HepG2 (cell line): ENCODE measurements at regions of chr19 and their contacts with region 1.

Region 1: GRCh38 chr19:44615863-44616247 is 2.5 kb downstream of the IGSF23 start:
- DNase-seq: peak; percentile 78
- ATAC-seq: peak; percentile 48
- H3K4me3 ChIP-seq: peak overlapping the region; percentile 3 to 79 (median 33); a peak in 4 of 6 replicates
- H3K27ac ChIP-seq: peak overlapping the region; percentile 92
- H3K4me1 ChIP-seq: peaks cover 70% of the 10 kb centered on the region
- H3K27me3 ChIP-seq: no peaks in the 10 kb centered on the region; a peak in 1 of 5 replicates
- CTCF ChIP-seq: no peak
- EP300 ChIP-seq: no peak; a peak in 2 of 4 replicates
- POLR2A ChIP-seq: no peak
- RAD21 ChIP-seq: no peak

Region 2: DNA sequence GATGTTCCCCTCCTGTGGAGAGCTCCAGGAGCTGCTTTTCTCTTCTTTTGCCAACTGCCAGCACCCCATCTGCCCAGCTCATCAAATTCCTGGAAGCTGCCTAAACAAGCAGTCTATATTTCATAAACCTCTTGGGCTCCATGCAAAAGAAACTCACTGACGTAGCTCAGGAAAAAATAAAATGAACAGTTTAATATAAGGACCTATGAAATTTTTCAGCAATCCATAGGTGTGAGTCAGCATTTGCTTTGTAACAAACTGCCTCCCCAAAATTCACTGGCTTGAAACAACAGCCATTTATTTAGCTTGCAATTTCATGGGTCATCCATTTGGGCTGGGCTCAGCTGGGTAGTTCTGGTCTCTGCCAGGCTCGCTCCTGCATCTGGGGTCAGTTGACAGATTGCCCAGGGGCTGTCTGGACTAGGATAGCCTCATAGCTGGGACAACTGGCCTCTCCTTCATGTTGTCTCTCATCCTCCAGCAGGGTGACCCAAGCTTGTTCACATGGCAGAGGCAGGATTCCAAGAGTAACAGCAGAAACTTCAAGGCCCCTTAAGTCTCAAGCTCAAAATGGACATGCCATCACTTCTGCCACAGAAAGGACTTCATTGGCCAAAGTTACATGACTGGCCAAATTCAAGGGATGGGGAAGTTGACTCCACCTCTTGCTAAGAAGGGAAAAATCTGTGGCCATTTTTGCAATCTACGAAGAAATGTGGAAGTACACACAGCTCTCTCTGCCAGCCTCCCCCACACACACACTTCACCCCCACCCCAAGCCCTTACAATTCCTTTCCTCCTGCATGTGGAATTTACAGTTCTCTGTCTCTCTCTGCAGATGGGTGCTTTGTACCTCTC is 20.0 kb after region 1 on chr19:
- CTCF ChIA-PET with region 1: no interaction called
- POLR2A ChIA-PET with region 1: interaction called, 68 read pairs
- in situ Hi-C with region 1: no loop called
- intact Hi-C with region 1: loop called (anchors 2 kb)
- DNase-seq: no peak
- ATAC-seq: peak; percentile 29; the same call in 2 of the 3 replicates
- H3K4me3 ChIP-seq: no peak overlapping the region
- H3K27ac ChIP-seq: peak overlapping the region; percentile 72
- H3K4me1 ChIP-seq: peaks cover 59% of the 10 kb centered on the region
- H3K27me3 ChIP-seq: no peaks in the 10 kb centered on the region
- CTCF ChIP-seq: no peak
- EP300 ChIP-seq: no peak
- POLR2A ChIP-seq: no peak
- RAD21 ChIP-seq: no peak

Region 3: GRCh38 chr19:44643605-44644401 is 27.9 kb after region 1 on chr19 and contains the start of gene PVR:
- CTCF ChIA-PET with region 1: no interaction called
- POLR2A ChIA-PET with region 1: interaction called, 36 read pairs
- in situ Hi-C with region 1: no loop called
- intact Hi-C with region 1: no loop called
- DNase-seq: peak; percentile 50
- ATAC-seq: peak; percentile 92
- H3K4me3 ChIP-seq: peak within 1 kb of the TSS; percentile 74 to 81 (median 79)
- H3K27ac ChIP-seq: peak within 1 kb of the TSS; percentile 82
- H3K4me1 ChIP-seq: peaks cover 60% of the 10 kb centered on the region
- H3K27me3 ChIP-seq: no peaks in the 10 kb centered on the region; a peak in 1 of 5 replicates
- CTCF ChIP-seq: peak; percentile 35
- EP300 ChIP-seq: no peak
- POLR2A ChIP-seq: peak; percentile 73 to 85
- RAD21 ChIP-seq: peak; percentile 64; the same call in 1 of the 2 replicates
- total RNA-seq, gene PVR: 18.4 and 43.4 TPM in 2 replicates

Region 4: DNA sequence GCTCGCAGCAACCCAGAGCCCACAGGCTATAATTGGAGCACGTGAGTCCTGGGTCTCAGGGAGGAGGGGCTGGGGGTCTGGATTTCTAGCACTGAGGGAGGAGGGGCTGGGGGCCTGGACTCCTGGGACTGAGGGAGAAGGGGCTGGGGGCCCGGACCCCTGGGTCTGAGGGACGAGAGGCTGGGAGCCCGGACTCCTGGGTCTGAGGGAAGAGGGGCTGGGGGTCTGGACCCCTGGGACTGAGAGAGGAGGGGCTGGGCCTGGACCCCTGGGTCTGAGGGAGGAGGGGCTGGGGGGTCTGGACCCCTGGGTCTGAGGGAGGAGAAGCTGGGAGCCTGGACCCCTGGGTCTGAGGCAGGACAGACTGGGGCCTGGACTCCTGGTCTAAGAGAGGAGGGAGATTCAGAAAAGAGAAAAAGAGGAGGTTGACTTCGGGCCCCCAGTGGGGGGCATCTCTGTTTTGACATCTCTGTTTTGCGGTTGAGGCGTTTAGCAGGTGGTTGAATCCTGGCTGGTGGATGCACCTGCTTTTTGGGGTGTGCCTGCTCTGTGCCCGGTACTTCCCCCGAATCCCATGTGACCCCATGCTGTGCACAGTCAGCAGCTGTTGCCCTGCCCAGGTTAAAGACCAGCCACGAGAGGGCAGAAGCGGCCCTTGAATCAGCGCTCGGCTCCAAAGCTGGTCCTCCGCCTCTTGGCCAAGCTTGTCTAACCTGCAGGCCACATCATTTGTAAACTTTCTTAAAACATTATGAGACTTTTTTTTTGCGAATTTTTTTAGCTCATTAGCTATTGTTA is 38.3 kb after region 1 on chr19:
- CTCF ChIA-PET with region 1: interaction called, 21 read pairs
- POLR2A ChIA-PET with region 1: interaction called, 20 read pairs
- in situ Hi-C with region 1: loop called (anchors 5 kb)
- intact Hi-C with region 1: no loop called
- DNase-seq: peak; percentile 36
- ATAC-seq: peak; percentile 75
- H3K4me3 ChIP-seq: no peak overlapping the region
- H3K27ac ChIP-seq: no peak overlapping the region
- H3K4me1 ChIP-seq: no peaks in the 10 kb centered on the region
- H3K27me3 ChIP-seq: no peaks in the 10 kb centered on the region
- CTCF ChIP-seq: peak; percentile 80
- EP300 ChIP-seq: no peak
- POLR2A ChIP-seq: no peak
- RAD21 ChIP-seq: peak; percentile 50; the same call in 1 of the 2 replicates